ENCODE measurements at regions of chr5 and their contacts with region 1.

Region 1: GRCh38 chr5:14142827-14143548 is at the start of gene TRIO:
- DNase-seq: peak; percentile 91 to 96 (median 95)
- H3K4me3 ChIP-seq: peak within 1 kb of the TSS; percentile 62 to 93 (median 86)
- H3K27ac ChIP-seq: peak within 1 kb of the TSS; percentile 51 to 97 (median 87)
- H3K4me1 ChIP-seq: peaks cover 28 to 36% of the 10 kb centered on the region in 2 donors
- H3K27me3 ChIP-seq: no peaks in the 10 kb centered on the region
- CTCF ChIP-seq: peak; percentile 28 to 55 (median 49)
- POLR2A ChIP-seq: peak; percentile 43 to 74
- total RNA-seq, gene TRIO: 41.1 to 108 (median 75.7) TPM

Region 2: GRCh38 chr5:14208071-14209021 is 65.4 kb after region 1 on chr5:
- intact Hi-C with region 1: loop called in 1 of 2 experiments (anchors 10 kb)
- DNase-seq: no peak
- H3K4me3 ChIP-seq: no peak overlapping the region
- H3K27ac ChIP-seq: no peak overlapping the region
- H3K4me1 ChIP-seq: peaks cover 23 to 64% of the 10 kb centered on the region in 2 donors
- H3K27me3 ChIP-seq: no peaks in the 10 kb centered on the region
- CTCF ChIP-seq: no peak
- POLR2A ChIP-seq: no peak

Region 3: DNA sequence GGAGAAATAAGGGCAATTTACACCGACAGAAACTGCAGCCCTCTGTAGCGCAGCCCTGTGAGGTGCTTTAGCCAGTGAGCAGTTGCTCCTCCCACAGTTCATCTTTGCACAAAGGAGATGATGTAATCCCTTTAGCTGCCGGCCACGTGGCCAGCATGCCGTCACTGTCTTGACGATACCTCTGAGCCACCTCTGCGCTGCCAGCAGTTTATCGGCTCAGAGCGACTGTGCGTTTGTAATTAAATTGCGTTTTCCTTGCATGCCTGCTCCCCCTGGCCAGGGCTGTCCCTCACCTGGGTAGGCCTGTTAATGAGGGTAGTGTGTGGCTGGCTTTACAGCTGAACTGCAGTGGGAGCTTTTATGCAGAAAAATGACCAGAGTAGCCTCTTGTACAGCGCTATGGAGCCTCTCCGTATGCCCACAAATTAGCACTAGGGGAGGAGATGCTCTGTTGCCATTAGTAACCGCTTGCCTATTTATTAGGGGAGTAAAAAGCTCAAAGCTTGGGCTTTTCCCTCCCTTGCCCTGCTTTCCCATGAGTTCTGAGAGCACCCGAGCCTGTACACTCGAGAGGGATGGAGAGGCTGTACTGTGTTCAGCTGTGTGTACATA is 107.2 kb after region 1 on chr5:
- intact Hi-C with region 1: loop called in 1 of 2 experiments (anchors 10 kb)
- DNase-seq: peak; percentile 48 to 94 (median 57)
- H3K4me3 ChIP-seq: no peak overlapping the region
- H3K27ac ChIP-seq: peak overlapping the region in 1 of 5 donors; percentile 79
- H3K4me1 ChIP-seq: peaks cover 0 to 27% of the 10 kb centered on the region in 2 donors
- H3K27me3 ChIP-seq: no peaks in the 10 kb centered on the region
- CTCF ChIP-seq: no peak
- POLR2A ChIP-seq: no peak

Region 4: GRCh38 chr5:14264604-14265316 is 121.8 kb after region 1 on chr5:
- intact Hi-C with region 1: loop called (anchors 10 kb)
- DNase-seq: peak; percentile 86 to 96 (median 93)
- H3K4me3 ChIP-seq: peak overlapping the region in 2 of 4 donors; percentile 7 to 32
- H3K27ac ChIP-seq: peak overlapping the region in 1 of 5 donors; percentile 31
- H3K4me1 ChIP-seq: peaks cover 19 to 45% of the 10 kb centered on the region in 2 donors
- H3K27me3 ChIP-seq: no peaks in the 10 kb centered on the region
- CTCF ChIP-seq: no peak
- POLR2A ChIP-seq: peak in 1 of 2 donors; percentile 64

Measured in adrenal gland (tissue), 19 donors.